ENCODE measurements at regions of chr5 and their contacts with region 1.

Region 1: DNA sequence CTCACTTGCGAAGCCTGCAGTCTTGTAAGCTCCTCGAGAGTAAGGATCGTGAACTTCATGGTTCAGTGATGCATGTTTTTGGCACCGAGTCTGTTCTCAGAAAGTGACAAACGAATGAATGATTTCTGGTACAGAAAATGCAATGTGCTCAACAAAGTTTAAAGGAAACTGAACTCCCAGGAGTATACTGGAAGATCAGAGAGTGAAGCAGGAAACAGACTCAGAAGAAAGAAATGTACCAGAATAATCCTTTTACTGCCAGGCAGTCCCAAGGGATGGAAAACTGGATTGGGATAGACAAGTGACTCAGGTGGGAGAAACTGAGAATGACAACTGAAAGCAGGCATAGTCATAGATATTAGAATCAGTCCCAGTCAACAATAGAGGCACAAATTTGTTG is 420.6 kb downstream of the CTNND2 start:
- DNase-seq: no peak
- H3K4me3 ChIP-seq: no peak overlapping the region
- H3K27ac ChIP-seq: no peak overlapping the region
- H3K4me1 ChIP-seq: no peaks in the 10 kb centered on the region
- H3K27me3 ChIP-seq: peaks cover 20% of the 10 kb centered on the region
- CTCF ChIP-seq: no peak

Region 2: DNA sequence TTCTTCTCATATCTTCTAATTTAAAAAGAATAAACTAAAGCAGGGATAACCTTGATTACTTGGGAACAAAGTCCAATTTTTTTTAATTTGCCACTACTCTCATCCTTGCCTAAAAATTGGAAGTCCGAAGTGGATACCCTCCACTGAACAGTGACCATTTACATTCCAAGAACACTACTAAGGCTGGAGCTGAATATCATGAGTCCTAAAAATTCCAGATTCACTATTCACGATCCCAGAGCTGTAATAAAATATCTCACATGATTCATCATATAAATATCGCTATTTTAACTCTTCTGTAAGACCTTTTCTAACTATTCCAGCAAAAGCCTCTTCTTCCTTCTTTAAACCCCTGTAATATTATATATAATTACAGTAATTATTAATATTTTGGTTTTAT is 1291.3 kb before region 1 on chr5:
- CTCF ChIA-PET with region 1: no interaction called
- POLR2A ChIA-PET with region 1: no interaction called
- intact Hi-C with region 1: loop called (anchors 2 kb)
- DNase-seq: no peak
- H3K4me3 ChIP-seq: no peak overlapping the region
- H3K27ac ChIP-seq: no peak overlapping the region
- H3K4me1 ChIP-seq: no peaks in the 10 kb centered on the region
- H3K27me3 ChIP-seq: peaks cover 27% of the 10 kb centered on the region
- CTCF ChIP-seq: no peak

Region 3: GRCh38 chr5:11514705-11515432 is 31.2 kb after region 1 on chr5:
- CTCF ChIA-PET with region 1: no interaction called
- POLR2A ChIA-PET with region 1: no interaction called
- intact Hi-C with region 1: no loop called
- DNase-seq: no peak
- H3K4me3 ChIP-seq: no peak overlapping the region
- H3K27ac ChIP-seq: no peak overlapping the region
- H3K4me1 ChIP-seq: no peaks in the 10 kb centered on the region
- H3K27me3 ChIP-seq: peaks cover 1% of the 10 kb centered on the region; the same call in 1 of the 2 replicates
- CTCF ChIP-seq: no peak